A549 (cell line): ENCODE measurements at regions of chr2 and their contacts with region 1.

Region 1: GRCh38 chr2:65064728-65065552 is 8.7 kb downstream of the CEP68 start:
- DNase-seq: peak; percentile 52 to 85
- ATAC-seq: peak; percentile 82 to 89
- H3K4me3 ChIP-seq: no peak overlapping the region
- H3K27ac ChIP-seq: peak overlapping the region; percentile 55 to 77
- H3K4me1 ChIP-seq: peaks cover 37% of the 10 kb centered on the region
- CTCF ChIP-seq: peak; percentile 79
- EP300 ChIP-seq: no peak
- POLR2A ChIP-seq: no peak
- RAD21 ChIP-seq: peak; percentile 82 to 89

Region 2: DNA sequence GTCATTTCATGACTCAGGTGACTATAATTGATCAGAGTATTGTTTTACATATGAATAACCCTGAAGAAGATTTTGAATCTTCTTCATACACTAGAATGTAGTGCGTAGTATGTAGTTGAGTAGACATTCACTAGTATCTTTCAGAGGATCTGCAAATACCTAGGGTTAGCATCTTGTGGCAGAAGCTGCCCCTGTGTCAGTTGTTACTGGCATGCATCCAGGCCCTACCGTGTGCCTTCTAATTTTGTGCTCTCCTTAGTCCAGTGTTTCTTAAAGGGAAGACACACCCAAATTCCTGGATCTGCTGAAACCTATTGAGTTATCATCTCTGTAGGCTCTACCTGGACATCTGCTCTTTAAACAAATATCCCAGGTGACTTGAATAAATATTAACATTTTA is 311.6 kb before region 1 on chr2:
- CTCF ChIA-PET with region 1: no interaction called
- POLR2A ChIA-PET with region 1: no interaction called
- DNase-seq: no peak
- ATAC-seq: no peak
- H3K4me3 ChIP-seq: no peak overlapping the region
- H3K27ac ChIP-seq: no peak overlapping the region
- H3K4me1 ChIP-seq: peaks cover 18% of the 10 kb centered on the region
- CTCF ChIP-seq: no peak
- EP300 ChIP-seq: no peak
- POLR2A ChIP-seq: no peak
- RAD21 ChIP-seq: no peak

Region 3: DNA sequence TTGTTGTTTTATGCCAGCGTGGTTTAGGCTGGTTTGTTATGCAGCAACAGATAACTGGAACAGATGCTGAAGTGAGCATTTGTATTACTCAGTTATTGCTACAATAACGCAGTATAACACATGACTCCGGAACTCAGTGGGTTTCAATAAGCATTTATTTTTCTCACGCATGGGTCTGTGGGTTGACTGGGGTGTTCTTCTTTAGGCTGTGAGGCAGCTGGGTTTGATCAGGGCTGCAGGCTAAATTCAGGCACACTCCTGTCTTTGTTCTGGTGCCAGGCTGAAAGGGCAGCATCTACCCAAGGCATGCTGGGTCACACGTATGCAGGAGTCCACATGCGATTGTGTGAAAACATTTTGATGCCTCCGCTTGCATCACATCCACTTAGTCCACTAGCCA is 79.5 kb before region 1 on chr2:
- CTCF ChIA-PET with region 1: no interaction called
- POLR2A ChIA-PET with region 1: no interaction called
- DNase-seq: no peak
- ATAC-seq: no peak
- H3K4me3 ChIP-seq: no peak overlapping the region
- H3K27ac ChIP-seq: no peak overlapping the region
- H3K4me1 ChIP-seq: peaks cover 32% of the 10 kb centered on the region
- CTCF ChIP-seq: no peak
- EP300 ChIP-seq: no peak
- POLR2A ChIP-seq: no peak
- RAD21 ChIP-seq: no peak

Region 4: GRCh38 chr2:65075605-65076344 is 10.8 kb after region 1 on chr2:
- CTCF ChIA-PET with region 1: interaction called, 52 read pairs
- POLR2A ChIA-PET with region 1: interaction called, 3 read pairs
- DNase-seq: no peak
- ATAC-seq: peak; percentile 31 to 49; a peak in 4 of 6 replicates
- H3K4me3 ChIP-seq: no peak overlapping the region
- H3K27ac ChIP-seq: no peak overlapping the region
- H3K4me1 ChIP-seq: peaks cover 19% of the 10 kb centered on the region
- CTCF ChIP-seq: no peak
- EP300 ChIP-seq: no peak
- POLR2A ChIP-seq: no peak; the same call in 1 of the 2 replicates
- RAD21 ChIP-seq: no peak

Region 5: DNA sequence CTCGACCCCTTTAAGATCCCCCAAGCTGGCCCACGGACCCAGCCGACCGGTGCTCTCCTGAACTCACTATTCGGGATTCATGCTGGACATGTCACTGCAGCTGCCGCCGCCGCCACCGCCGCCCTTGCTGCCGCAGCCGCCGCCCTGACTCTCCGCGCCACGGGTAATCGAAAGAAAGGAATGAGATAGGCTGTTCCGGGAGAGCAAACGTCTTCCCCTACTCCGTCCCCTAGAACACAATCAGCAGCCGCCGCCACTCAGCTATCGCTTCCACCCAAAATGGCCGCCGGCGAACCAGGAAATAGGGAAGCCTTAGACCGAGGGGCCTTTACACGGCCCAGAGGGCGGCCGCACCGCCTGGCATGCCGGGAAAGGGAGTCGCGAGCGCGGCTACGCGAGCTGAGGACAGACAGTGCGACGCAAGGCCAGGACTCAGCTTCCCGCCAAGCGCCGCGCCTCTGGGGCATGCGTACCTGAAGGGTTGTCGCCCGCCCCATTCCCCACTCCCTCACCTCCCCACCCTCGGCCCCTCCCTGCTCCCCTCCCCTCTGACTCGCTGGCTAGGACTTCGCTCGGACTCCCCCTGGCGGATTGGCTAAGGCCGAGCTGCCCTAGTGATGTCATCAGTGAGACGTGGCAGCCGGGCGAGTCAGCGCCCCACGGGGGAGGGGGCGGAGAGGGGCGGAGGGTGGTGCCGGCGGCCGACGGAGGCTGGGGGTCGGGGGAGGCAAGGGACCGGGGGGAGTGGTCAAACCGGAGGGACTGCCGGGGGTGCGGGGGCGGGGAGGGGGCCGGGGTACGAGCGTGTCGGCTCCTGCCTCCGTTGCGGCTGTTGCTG is 65.1 kb after region 1 on chr2 and contains the start of gene RAB1A:
- CTCF ChIA-PET with region 1: interaction called, 7 read pairs
- POLR2A ChIA-PET with region 1: interaction called, 19 read pairs
- DNase-seq: peak; percentile 96 to 100
- ATAC-seq: peak; percentile 91 to 97
- H3K4me3 ChIP-seq: peak within 1 kb of the TSS; percentile 85
- H3K27ac ChIP-seq: peak within 1 kb of the TSS; percentile 95
- H3K4me1 ChIP-seq: peaks cover 42% of the 10 kb centered on the region
- CTCF ChIP-seq: peak; percentile 42
- EP300 ChIP-seq: no peak
- POLR2A ChIP-seq: peak; percentile 78
- RAD21 ChIP-seq: peak in 1 of 2 experiments; percentile 46; a peak in 2 of 5 replicates
- polyA plus RNA-seq, gene RAB1A: 351 and 417 TPM in 2 replicates

Region 6: GRCh38 chr2:65177751-65178442 is 113.0 kb after region 1 on chr2:
- CTCF ChIA-PET with region 1: interaction called, 10 read pairs
- POLR2A ChIA-PET with region 1: no interaction called
- DNase-seq: no peak
- ATAC-seq: peak; percentile 30 to 41; a peak in 2 of 6 replicates
- H3K4me3 ChIP-seq: no peak overlapping the region
- H3K27ac ChIP-seq: no peak overlapping the region
- H3K4me1 ChIP-seq: peaks cover 5% of the 10 kb centered on the region; the same call in 1 of the 3 replicates
- CTCF ChIP-seq: no peak
- EP300 ChIP-seq: no peak
- POLR2A ChIP-seq: no peak
- RAD21 ChIP-seq: no peak

Region 7: GRCh38 chr2:65227425-65228262 is 162.7 kb after region 1 on chr2 and contains the start of gene ACTR2:
- CTCF ChIA-PET with region 1: interaction called, 11 read pairs
- POLR2A ChIA-PET with region 1: interaction called, 7 read pairs
- DNase-seq: peak; percentile 86 to 98
- ATAC-seq: peak; percentile 97
- H3K4me3 ChIP-seq: peak within 1 kb of the TSS; percentile 94
- H3K27ac ChIP-seq: peak within 1 kb of the TSS; percentile 95 to 98
- H3K4me1 ChIP-seq: peaks cover 43% of the 10 kb centered on the region
- CTCF ChIP-seq: no peak
- EP300 ChIP-seq: peak in 1 of 2 experiments; percentile 18; a peak in 1 of 5 replicates
- POLR2A ChIP-seq: peak; percentile 90
- RAD21 ChIP-seq: no peak
- polyA plus RNA-seq, gene ACTR2: 233 and 270 TPM in 2 replicates